ENCODE measurements at regions of chr3 and their contacts with region 1.

Region 1: GRCh38 chr3:133805527-133806475 is at the start of gene SRPRB:
- H3K4me3 Mint-ChIP-seq: peak within 1 kb of the TSS; percentile 93
- H3K27ac Mint-ChIP-seq: peak within 1 kb of the TSS; percentile 93
- H3K4me1 Mint-ChIP-seq: peaks cover 29% of the 10 kb centered on the region
- H3K27me3 Mint-ChIP-seq: peaks cover 3% of the 10 kb centered on the region

Region 2: GRCh38 chr3:133591271-133591742 is 214.5 kb before region 1 on chr3:
- intact Hi-C with region 1: no loop called
- H3K4me3 Mint-ChIP-seq: no peak overlapping the region
- H3K27ac Mint-ChIP-seq: no peak overlapping the region
- H3K4me1 Mint-ChIP-seq: no peaks in the 10 kb centered on the region
- H3K27me3 Mint-ChIP-seq: no peaks in the 10 kb centered on the region

Region 3: GRCh38 chr3:133661454-133662277 is 144.1 kb before region 1 on chr3 and contains the start of gene TOPBP1:
- intact Hi-C with region 1: loop called (anchors 5 kb)
- H3K4me3 Mint-ChIP-seq: peak within 1 kb of the TSS; percentile 88
- H3K27ac Mint-ChIP-seq: peak within 1 kb of the TSS; percentile 91
- H3K4me1 Mint-ChIP-seq: peaks cover 31% of the 10 kb centered on the region
- H3K27me3 Mint-ChIP-seq: no peaks in the 10 kb centered on the region